ENCODE measurements at regions of chr14 and their contacts with region 1.

Region 1: GRCh38 chr14:71103662-71104484 is 196.6 kb downstream of the PCNX1 start:
- DNase-seq: peak in 4 of 5 donors; percentile 40 to 50 (median 47)
- H3K4me3 ChIP-seq: no peak overlapping the region
- H3K4me3 Mint-ChIP-seq: no peak overlapping the region
- H3K27ac ChIP-seq: no peak overlapping the region
- H3K27ac Mint-ChIP-seq: peak overlapping the region in 4 of 7 donors; percentile 11 to 22 (median 16)
- H3K4me1 ChIP-seq: peaks cover 8% of the 10 kb centered on the region
- H3K4me1 Mint-ChIP-seq: peaks cover 10 to 24% (median 18%) of the 10 kb centered on the region in 4 donors
- H3K27me3 ChIP-seq: no peaks in the 10 kb centered on the region
- H3K27me3 Mint-ChIP-seq: no peaks in the 10 kb centered on the region

Region 2: DNA sequence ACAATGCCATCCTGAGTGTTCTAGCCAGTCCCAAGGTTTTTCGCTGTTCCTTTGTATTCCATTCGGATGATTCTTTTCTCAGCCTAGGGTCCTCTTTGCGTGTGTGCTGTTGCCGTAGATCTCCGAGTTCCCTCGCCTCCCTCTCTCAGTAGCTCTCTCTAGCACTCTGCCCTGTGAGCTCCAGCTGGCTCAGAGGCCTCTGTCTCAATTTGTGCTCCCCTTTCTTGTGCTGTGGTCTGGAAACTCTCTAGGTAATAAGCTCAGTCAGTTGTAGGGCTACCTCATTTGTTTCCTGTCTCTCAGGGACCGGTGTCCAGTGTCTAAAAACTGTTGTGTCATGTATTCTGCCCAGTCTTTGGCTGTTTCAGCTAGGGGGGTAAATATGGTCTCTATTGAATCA is 17.3 kb before region 1 on chr14:
- CTCF ChIA-PET with region 1: interaction called, 10 read pairs
- POLR2A ChIA-PET with region 1: interaction called, 3 read pairs
- intact Hi-C with region 1: no loop called
- DNase-seq: no peak
- H3K4me3 ChIP-seq: no peak overlapping the region
- H3K4me3 Mint-ChIP-seq: peak overlapping the region in 1 of 8 donors; percentile 57
- H3K27ac ChIP-seq: no peak overlapping the region
- H3K27ac Mint-ChIP-seq: peak overlapping the region in 6 of 7 donors; percentile 6 to 83 (median 76)
- H3K4me1 ChIP-seq: no peaks in the 10 kb centered on the region
- H3K4me1 Mint-ChIP-seq: peaks cover 21 to 34% (median 29%) of the 10 kb centered on the region in 4 donors
- H3K27me3 ChIP-seq: no peaks in the 10 kb centered on the region
- H3K27me3 Mint-ChIP-seq: no peaks in the 10 kb centered on the region

Region 3: GRCh38 chr14:71115821-71116567 is 12.1 kb after region 1 on chr14:
- CTCF ChIA-PET with region 1: interaction called, 17 read pairs
- POLR2A ChIA-PET with region 1: no interaction called
- intact Hi-C with region 1: no loop called
- DNase-seq: no peak
- H3K4me3 ChIP-seq: no peak overlapping the region
- H3K4me3 Mint-ChIP-seq: no peak overlapping the region
- H3K27ac ChIP-seq: no peak overlapping the region
- H3K27ac Mint-ChIP-seq: no peak overlapping the region
- H3K4me1 ChIP-seq: no peaks in the 10 kb centered on the region
- H3K4me1 Mint-ChIP-seq: peaks cover 0 to 5% (median 1%) of the 10 kb centered on the region in 4 donors
- H3K27me3 ChIP-seq: no peaks in the 10 kb centered on the region
- H3K27me3 Mint-ChIP-seq: no peaks in the 10 kb centered on the region

Region 4: GRCh38 chr14:71166180-71166790 is 62.4 kb after region 1 on chr14:
- CTCF ChIA-PET with region 1: no interaction called
- POLR2A ChIA-PET with region 1: no interaction called
- intact Hi-C with region 1: no loop called
- DNase-seq: no peak
- H3K4me3 ChIP-seq: no peak overlapping the region
- H3K4me3 Mint-ChIP-seq: no peak overlapping the region
- H3K27ac ChIP-seq: no peak overlapping the region
- H3K27ac Mint-ChIP-seq: peak overlapping the region in 1 of 7 donors; percentile 38
- H3K4me1 ChIP-seq: no peaks in the 10 kb centered on the region
- H3K4me1 Mint-ChIP-seq: peaks cover 12 to 14% (median 12%) of the 10 kb centered on the region in 4 donors
- H3K27me3 ChIP-seq: no peaks in the 10 kb centered on the region
- H3K27me3 Mint-ChIP-seq: peaks cover 2% of the 10 kb centered on the region in 2 donors